Right ventricle myocardium inferior (tissue), 1 donor: ENCODE measurements at regions of chr19 and their contacts with region 1.

Region 1: DNA sequence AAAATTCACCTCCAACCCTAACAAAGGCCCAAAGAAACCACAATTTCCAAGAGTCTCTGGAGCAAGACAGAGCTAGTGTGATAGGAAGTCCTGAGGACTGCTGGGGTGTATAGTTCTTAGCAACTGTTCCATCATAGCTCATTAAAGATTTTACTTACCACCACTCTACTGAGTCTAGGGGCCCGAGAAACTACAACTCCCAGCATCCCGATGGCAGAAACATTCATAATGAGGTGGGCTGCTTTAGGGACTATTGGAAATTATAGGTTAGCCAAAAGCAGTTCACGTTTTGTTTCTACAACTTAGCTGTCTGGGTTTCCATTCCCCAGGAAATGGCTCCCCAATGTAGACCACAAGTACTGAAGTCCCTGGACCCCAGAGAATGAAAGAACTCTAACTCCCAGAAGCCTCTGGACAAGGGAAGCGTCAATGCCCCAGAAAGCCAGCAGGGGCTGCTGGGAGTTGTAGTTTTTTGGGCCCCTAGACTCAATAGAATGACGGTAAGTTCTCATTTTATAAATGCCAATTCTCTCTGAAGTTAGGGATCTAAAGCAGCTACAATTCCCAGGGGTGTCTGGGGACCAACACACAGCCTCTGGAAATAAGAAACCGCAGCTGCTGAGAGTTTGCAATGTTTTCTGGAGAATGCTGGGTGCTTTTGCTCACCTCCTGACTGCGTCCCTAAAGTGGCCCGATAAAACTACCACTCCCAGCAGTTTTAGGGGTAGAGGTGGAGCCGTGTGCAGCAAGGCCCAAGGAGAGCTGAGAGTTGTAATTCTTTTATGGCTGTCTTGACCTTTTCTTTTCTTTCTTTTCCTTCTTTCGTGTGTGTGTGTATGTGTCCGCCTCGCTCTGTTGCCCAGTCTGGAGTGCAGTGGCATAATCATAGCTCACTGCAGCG is 11.1 kb downstream of the FTL start:
- DNase-seq: no peak
- ATAC-seq: no peak

Region 2: GRCh38 chr19:48637170-48637947 is 338.8 kb before region 1 on chr19 and contains the start of gene DBP:
- intact Hi-C with region 1: loop called (anchors 5 kb)
- DNase-seq: peak; percentile 99
- ATAC-seq: peak; percentile 83
- total RNA-seq, gene DBP: 15.2 TPM